MCF 10A (cell line): ENCODE measurements at regions of chr2 and their contacts with region 1.

Region 1: DNA sequence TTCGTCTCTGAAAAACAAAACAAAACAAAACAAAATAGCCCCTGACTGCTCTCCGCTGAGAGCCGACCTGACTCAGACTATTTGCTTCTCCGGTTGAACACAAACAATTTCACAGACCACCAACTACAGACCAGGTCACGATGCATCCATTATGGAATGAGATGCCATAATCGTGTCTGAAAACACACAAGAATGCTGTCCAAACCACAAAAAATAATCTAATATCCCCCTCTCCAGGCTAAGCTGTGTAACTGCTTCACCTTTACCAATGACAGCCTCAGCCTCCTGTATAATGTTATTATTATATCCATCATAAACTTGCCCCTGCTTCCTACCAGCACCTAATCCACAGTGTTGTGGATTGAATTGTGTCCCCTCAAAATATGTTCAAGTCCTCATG is 114.7 kb downstream of the DNAH6 start:
- DNase-seq: peak; percentile 47
- H3K4me3 Mint-ChIP-seq: no peak overlapping the region
- H3K27ac Mint-ChIP-seq: no peak overlapping the region
- H3K4me1 Mint-ChIP-seq: peaks cover 5% of the 10 kb centered on the region
- H3K27me3 Mint-ChIP-seq: no peaks in the 10 kb centered on the region
- CTCF ChIP-seq: peak; percentile 70

Region 2: DNA sequence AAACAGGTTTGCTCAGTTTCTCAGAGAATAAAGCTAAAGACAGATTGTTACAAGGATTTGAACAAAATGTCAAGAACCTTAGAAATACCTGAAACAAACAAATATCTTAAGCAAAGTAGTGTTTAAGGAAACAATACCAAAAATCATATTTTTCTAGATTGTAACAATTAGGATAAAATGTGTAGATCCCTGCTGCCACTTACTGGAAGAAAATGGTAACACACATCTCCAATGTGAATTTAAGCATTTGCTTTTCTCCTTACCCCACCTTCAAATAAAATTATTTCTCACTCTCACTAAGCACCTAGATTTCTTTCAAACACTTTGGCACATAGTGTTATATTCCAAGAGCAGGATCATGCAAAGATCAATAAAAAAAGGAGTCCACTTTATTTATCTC is 206.9 kb before region 1 on chr2:
- CTCF ChIA-PET with region 1: interaction called, 3 read pairs
- POLR2A ChIA-PET with region 1: interaction called, 5 read pairs
- intact Hi-C with region 1: loop called (anchors 5 kb)
- DNase-seq: peak; percentile 26
- H3K4me3 Mint-ChIP-seq: no peak overlapping the region
- H3K27ac Mint-ChIP-seq: no peak overlapping the region
- H3K4me1 Mint-ChIP-seq: peaks cover 13% of the 10 kb centered on the region
- H3K27me3 Mint-ChIP-seq: no peaks in the 10 kb centered on the region
- CTCF ChIP-seq: peak; percentile 63

Region 3: GRCh38 chr2:84495539-84496146 is 135.4 kb before region 1 on chr2:
- CTCF ChIA-PET with region 1: interaction called, 3 read pairs
- POLR2A ChIA-PET with region 1: no interaction called
- intact Hi-C with region 1: loop called (anchors 1 kb)
- DNase-seq: peak; percentile 72
- H3K4me3 Mint-ChIP-seq: no peak overlapping the region
- H3K27ac Mint-ChIP-seq: peak overlapping the region; percentile 35
- H3K4me1 Mint-ChIP-seq: peaks cover 21% of the 10 kb centered on the region
- H3K27me3 Mint-ChIP-seq: no peaks in the 10 kb centered on the region
- CTCF ChIP-seq: peak; percentile 53

Region 4: DNA sequence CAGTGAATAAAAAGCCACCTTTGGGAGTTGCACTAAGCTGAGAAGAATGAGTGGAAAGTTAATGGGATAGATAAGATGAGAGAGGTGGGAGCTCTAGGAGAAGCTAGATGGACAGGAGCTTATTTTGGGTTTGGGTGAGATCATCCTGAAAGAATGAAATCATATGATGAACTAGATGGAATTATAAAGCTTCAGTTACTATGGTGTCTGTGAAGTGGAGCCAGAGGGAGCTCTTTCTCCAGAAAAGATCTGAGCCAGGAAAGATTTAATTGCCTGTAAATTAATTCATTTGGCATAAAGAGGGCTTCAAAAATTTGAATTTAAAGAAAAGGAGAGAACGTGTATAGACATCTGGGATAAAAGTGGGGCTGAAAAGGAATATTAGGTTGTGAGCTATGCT is 104.5 kb before region 1 on chr2:
- CTCF ChIA-PET with region 1: interaction called, 16 read pairs
- POLR2A ChIA-PET with region 1: no interaction called
- intact Hi-C with region 1: no loop called
- DNase-seq: no peak
- H3K4me3 Mint-ChIP-seq: no peak overlapping the region
- H3K27ac Mint-ChIP-seq: no peak overlapping the region
- H3K4me1 Mint-ChIP-seq: no peaks in the 10 kb centered on the region
- H3K27me3 Mint-ChIP-seq: no peaks in the 10 kb centered on the region
- CTCF ChIP-seq: peak; percentile 25

Region 5: GRCh38 chr2:84694088-84694622 is 63.1 kb after region 1 on chr2:
- CTCF ChIA-PET with region 1: no interaction called
- POLR2A ChIA-PET with region 1: no interaction called
- intact Hi-C with region 1: no loop called
- DNase-seq: no peak
- H3K4me3 Mint-ChIP-seq: no peak overlapping the region
- H3K27ac Mint-ChIP-seq: no peak overlapping the region
- H3K4me1 Mint-ChIP-seq: no peaks in the 10 kb centered on the region
- H3K27me3 Mint-ChIP-seq: no peaks in the 10 kb centered on the region
- CTCF ChIP-seq: no peak

Region 6: GRCh38 chr2:84716564-84716963 is 85.5 kb after region 1 on chr2:
- CTCF ChIA-PET with region 1: no interaction called
- POLR2A ChIA-PET with region 1: no interaction called
- intact Hi-C with region 1: no loop called
- DNase-seq: no peak
- H3K4me3 Mint-ChIP-seq: no peak overlapping the region
- H3K27ac Mint-ChIP-seq: no peak overlapping the region
- H3K4me1 Mint-ChIP-seq: peaks cover 5% of the 10 kb centered on the region
- H3K27me3 Mint-ChIP-seq: no peaks in the 10 kb centered on the region
- CTCF ChIP-seq: no peak

Region 7: DNA sequence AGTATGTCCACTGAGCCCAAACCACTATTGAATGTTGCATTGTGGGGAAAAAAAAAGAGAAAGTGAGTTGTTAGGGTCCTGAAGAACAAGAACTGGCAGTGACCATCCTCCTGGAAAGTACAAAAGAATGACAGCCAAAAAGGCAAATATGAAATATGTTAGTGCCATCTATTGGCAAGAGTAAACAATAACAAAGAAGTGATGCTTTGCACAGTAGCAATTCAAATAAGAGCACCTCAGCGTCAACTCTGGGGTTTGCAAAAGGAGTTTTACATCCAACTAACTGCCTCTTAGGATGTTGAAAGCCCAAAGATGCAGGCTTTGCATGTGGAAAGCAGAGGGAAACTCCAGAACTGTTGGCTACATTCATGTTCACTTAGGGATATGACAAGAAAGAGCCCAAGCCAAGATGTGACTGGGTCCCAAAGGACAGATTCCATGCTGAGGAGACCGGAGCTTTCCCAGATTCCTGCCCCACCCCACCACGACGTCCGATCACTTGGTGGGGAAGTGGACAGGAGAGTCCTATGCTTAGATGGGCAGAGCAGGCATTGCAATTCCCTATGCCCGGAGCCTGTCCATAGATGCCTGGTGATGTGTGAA is 234.2 kb after region 1 on chr2:
- CTCF ChIA-PET with region 1: interaction called, 3 read pairs
- POLR2A ChIA-PET with region 1: no interaction called
- intact Hi-C with region 1: loop called (anchors 1 kb)
- DNase-seq: peak; percentile 47
- H3K4me3 Mint-ChIP-seq: no peak overlapping the region
- H3K27ac Mint-ChIP-seq: no peak overlapping the region
- H3K4me1 Mint-ChIP-seq: peaks cover 5% of the 10 kb centered on the region
- H3K27me3 Mint-ChIP-seq: no peaks in the 10 kb centered on the region
- CTCF ChIP-seq: peak; percentile 49

Region 8: GRCh38 chr2:84881581-84882414 is 250.8 kb after region 1 on chr2:
- CTCF ChIA-PET with region 1: interaction called, 5 read pairs
- POLR2A ChIA-PET with region 1: no interaction called
- intact Hi-C with region 1: loop called (anchors 5 kb)
- DNase-seq: peak; percentile 88
- H3K4me3 Mint-ChIP-seq: peak overlapping the region; percentile 88
- H3K27ac Mint-ChIP-seq: peak overlapping the region; percentile 52
- H3K4me1 Mint-ChIP-seq: peaks cover 17% of the 10 kb centered on the region
- H3K27me3 Mint-ChIP-seq: no peaks in the 10 kb centered on the region
- CTCF ChIP-seq: peak; percentile 47